H1 (cell line): ENCODE measurements at regions of chr3 and their contacts with region 1.

Region 1: GRCh38 chr3:139111392-139112229 is 66.9 kb upstream of the PRR23C start:
- DNase-seq: peak; percentile 10 to 87
- H3K4me3 ChIP-seq: no peak overlapping the region
- H3K27ac ChIP-seq: no peak overlapping the region
- H3K4me1 ChIP-seq: no peaks in the 10 kb centered on the region; a peak in 1 of 7 replicates
- H3K27me3 ChIP-seq: no peaks in the 10 kb centered on the region
- CTCF ChIP-seq: peak; percentile 74 to 85 (median 79)
- EP300 ChIP-seq: no peak
- POLR2A ChIP-seq: no peak
- RAD21 ChIP-seq: peak; percentile 77

Region 2: GRCh38 chr3:138974462-138974861 is 137.1 kb before region 1 on chr3:
- CTCF ChIA-PET with region 1: interaction called, 15 read pairs
- POLR2A ChIA-PET with region 1: no interaction called
- DNase-seq: no peak
- H3K4me3 ChIP-seq: no peak overlapping the region
- H3K27ac ChIP-seq: no peak overlapping the region
- H3K4me1 ChIP-seq: no peaks in the 10 kb centered on the region
- H3K27me3 ChIP-seq: no peaks in the 10 kb centered on the region
- CTCF ChIP-seq: no peak
- EP300 ChIP-seq: no peak
- POLR2A ChIP-seq: no peak
- RAD21 ChIP-seq: no peak

Region 3: GRCh38 chr3:139020868-139021234 is 90.8 kb before region 1 on chr3 and contains the start of gene PRR23B:
- CTCF ChIA-PET with region 1: no interaction called
- POLR2A ChIA-PET with region 1: no interaction called
- DNase-seq: peak in 1 of 2 experiments; percentile 51
- H3K4me3 ChIP-seq: no peak within 1 kb of the TSS
- H3K27ac ChIP-seq: no peak within 1 kb of the TSS
- H3K4me1 ChIP-seq: no peaks in the 10 kb centered on the region
- H3K27me3 ChIP-seq: no peaks in the 10 kb centered on the region
- CTCF ChIP-seq: peak in 2 of 3 experiments; percentile 32 to 47; a peak in 2 of 4 replicates
- EP300 ChIP-seq: no peak
- POLR2A ChIP-seq: no peak
- RAD21 ChIP-seq: peak in 1 of 2 experiments; percentile 12; a peak in 1 of 4 replicates
- total RNA-seq, gene PRR23B: not detected in 2 replicates

Region 4: GRCh38 chr3:139074565-139075115 is 37.0 kb before region 1 on chr3:
- CTCF ChIA-PET with region 1: no interaction called
- POLR2A ChIA-PET with region 1: no interaction called
- DNase-seq: no peak
- H3K4me3 ChIP-seq: no peak overlapping the region
- H3K27ac ChIP-seq: no peak overlapping the region
- H3K4me1 ChIP-seq: no peaks in the 10 kb centered on the region
- H3K27me3 ChIP-seq: no peaks in the 10 kb centered on the region
- CTCF ChIP-seq: no peak
- EP300 ChIP-seq: no peak
- POLR2A ChIP-seq: no peak
- RAD21 ChIP-seq: no peak

Region 5: DNA sequence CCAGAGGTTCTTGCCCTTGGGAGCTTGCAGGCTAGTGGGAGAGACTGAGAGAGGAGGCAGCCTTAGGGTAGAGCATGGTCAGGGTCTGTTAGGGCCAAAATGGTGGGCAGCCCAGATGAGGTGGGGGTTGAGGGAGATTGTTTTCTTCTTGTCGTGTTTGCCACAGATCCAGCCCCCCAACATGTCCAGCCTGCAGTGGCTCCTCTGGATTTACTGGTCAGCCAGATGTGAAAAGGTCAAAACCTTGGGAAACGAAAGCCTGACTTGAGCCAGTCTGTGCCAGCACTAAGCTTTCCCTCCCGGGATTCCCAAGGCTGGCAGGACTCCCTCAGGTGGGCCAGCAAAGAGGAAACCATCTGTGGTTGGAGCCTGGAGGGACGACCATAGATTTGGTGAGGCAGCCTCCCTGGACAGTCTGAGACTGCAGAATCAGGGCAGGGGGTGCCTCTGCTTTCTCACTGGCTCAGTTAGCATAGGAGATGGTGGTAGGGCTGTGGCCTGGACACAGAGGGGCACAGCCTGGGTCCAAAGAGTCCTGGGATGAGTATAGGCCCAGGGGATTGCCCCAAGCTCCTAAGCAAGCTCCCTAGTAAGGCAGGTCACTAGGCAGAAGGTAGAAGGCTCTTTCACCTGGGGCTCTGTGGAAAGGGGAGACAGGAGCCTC is 15.7 kb before region 1 on chr3:
- CTCF ChIA-PET with region 1: interaction called, 29 read pairs
- POLR2A ChIA-PET with region 1: no interaction called
- DNase-seq: no peak
- H3K4me3 ChIP-seq: no peak overlapping the region
- H3K27ac ChIP-seq: no peak overlapping the region
- H3K4me1 ChIP-seq: no peaks in the 10 kb centered on the region
- H3K27me3 ChIP-seq: no peaks in the 10 kb centered on the region
- CTCF ChIP-seq: no peak
- EP300 ChIP-seq: no peak
- POLR2A ChIP-seq: no peak
- RAD21 ChIP-seq: no peak

Region 6: GRCh38 chr3:139132976-139133375 is 21.4 kb after region 1 on chr3:
- CTCF ChIA-PET with region 1: interaction called, 22 read pairs
- POLR2A ChIA-PET with region 1: no interaction called
- DNase-seq: no peak
- H3K4me3 ChIP-seq: no peak overlapping the region
- H3K27ac ChIP-seq: no peak overlapping the region
- H3K4me1 ChIP-seq: peaks cover 0 to 4% (median 0%) of the 10 kb centered on the region in 4 experiments; a peak in 2 of 7 replicates
- H3K27me3 ChIP-seq: no peaks in the 10 kb centered on the region; a peak in 1 of 7 replicates
- CTCF ChIP-seq: no peak
- EP300 ChIP-seq: no peak
- POLR2A ChIP-seq: no peak
- RAD21 ChIP-seq: no peak

Region 7: GRCh38 chr3:139319428-139320402 is 208.1 kb after region 1 on chr3:
- CTCF ChIA-PET with region 1: interaction called, 39 read pairs
- POLR2A ChIA-PET with region 1: no interaction called
- DNase-seq: peak; percentile 36 to 85
- H3K4me3 ChIP-seq: no peak overlapping the region
- H3K27ac ChIP-seq: no peak overlapping the region
- H3K4me1 ChIP-seq: peaks cover 0 to 2% (median 0%) of the 10 kb centered on the region in 4 experiments; a peak in 2 of 7 replicates
- H3K27me3 ChIP-seq: no peaks in the 10 kb centered on the region
- CTCF ChIP-seq: peak; percentile 77 to 95 (median 79)
- EP300 ChIP-seq: no peak
- POLR2A ChIP-seq: no peak
- RAD21 ChIP-seq: peak; percentile 47 to 66; a peak in 3 of 4 replicates